Activated CD8-positive, alpha-beta memory T cell treated with anti-CD3 and anti-CD28 coated beads, Interleukin-2, amount 10 ng/mL, durations not matched to agents 7 days and 5 days (primary cell): ENCODE measurements at regions of chr21 and their contacts with region 1.

Region 1: GRCh38 chr21:39388038-39388810 is 39.3 kb upstream of the HMGN1 start:
- DNase-seq: peak; percentile 92
- ATAC-seq: peak; percentile 89
- H3K4me3 Mint-ChIP-seq: peak overlapping the region; percentile 77
- H3K27ac Mint-ChIP-seq: peak overlapping the region; percentile 85
- H3K4me1 Mint-ChIP-seq: peaks cover 34% of the 10 kb centered on the region
- H3K27me3 Mint-ChIP-seq: no peaks in the 10 kb centered on the region

Region 2: DNA sequence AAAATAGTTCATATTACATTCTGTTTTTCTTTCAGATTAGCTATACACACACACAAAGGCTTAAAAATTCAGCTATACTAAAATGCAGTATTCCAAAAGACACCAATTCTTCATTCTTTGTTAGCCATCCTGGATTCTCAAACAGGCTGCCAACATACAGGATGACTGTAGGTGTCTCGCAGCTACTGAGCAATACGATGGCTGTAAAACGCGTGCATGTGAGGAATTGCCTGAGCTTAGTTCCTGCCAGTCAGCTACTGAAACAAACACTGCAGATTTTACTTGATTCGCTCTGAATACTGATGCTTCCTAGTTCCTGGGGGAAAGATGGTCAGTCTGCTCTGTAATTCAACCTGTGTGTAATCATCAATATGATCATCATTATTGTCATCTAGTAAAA is 14.6 kb before region 1 on chr21:
- CTCF ChIA-PET with region 1: interaction called, 15 read pairs
- DNase-seq: no peak
- ATAC-seq: peak; percentile 74
- H3K4me3 Mint-ChIP-seq: no peak overlapping the region
- H3K27ac Mint-ChIP-seq: no peak overlapping the region
- H3K4me1 Mint-ChIP-seq: peaks cover 21% of the 10 kb centered on the region
- H3K27me3 Mint-ChIP-seq: peaks cover 18% of the 10 kb centered on the region